GM13977 (cell line): ENCODE measurements at regions of chr2 and their contacts with region 1.

Region 1: DNA sequence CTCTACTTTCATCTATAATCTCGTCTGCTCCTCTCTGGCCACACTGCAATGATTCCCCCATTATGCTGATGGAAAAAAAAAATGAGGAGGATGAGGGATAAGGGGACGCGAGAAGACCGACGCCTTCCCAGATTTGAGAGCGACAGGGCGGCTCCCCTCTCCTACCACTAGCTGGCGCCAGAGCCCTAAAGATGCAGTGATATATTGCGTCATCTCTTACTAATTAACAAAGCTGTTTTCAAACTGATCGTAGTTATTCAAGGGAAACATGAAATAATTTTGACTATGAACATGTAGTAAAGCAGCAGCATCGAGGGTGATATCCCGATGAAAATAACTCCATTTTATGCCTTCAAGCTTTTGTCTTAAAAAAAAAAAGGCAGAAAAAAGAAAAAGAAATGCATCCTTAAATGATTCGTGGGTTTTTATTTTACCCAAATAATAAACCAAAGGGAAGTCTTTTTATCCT is 48.0 kb upstream of the HNRNPA3 start:
- DNase-seq: peak; percentile 54
- CTCF ChIP-seq: peak; percentile 99

Region 2: DNA sequence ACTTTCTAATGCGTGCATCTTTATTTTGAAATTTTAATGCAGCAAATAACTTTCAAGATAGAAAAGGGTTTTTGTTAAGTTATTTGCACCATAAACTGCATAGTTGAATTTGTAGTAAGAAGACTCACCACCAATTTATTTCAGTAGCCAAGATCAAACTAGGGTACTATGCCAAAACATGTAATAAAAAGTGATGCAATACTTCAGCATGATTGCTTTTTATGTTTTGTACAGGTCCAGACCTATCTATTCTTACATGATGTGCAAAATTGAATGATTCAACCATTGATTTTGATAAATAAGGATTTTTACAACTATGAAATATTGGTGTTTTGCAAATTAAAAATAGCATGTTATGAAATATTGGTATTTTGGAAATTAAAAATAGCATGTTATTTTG is 254.7 kb after region 1 on chr2:
- in situ Hi-C with region 1: loop called (anchors 10 kb)
- DNase-seq: no peak
- CTCF ChIP-seq: no peak

Region 3: GRCh38 chr2:177618255-177619253 is 453.9 kb after region 1 on chr2:
- in situ Hi-C with region 1: loop called (anchors 25 kb)
- DNase-seq: peak; percentile 85
- CTCF ChIP-seq: no peak

Region 4: GRCh38 chr2:177666408-177666807 is 501.8 kb after region 1 on chr2:
- in situ Hi-C with region 1: no loop called
- DNase-seq: no peak
- CTCF ChIP-seq: no peak

Region 5: GRCh38 chr2:177724398-177725287 is 560.0 kb after region 1 on chr2:
- in situ Hi-C with region 1: loop called (anchors 25 kb)
- DNase-seq: peak; percentile 48
- CTCF ChIP-seq: peak; percentile 88